ENCODE measurements at regions of chr9 and their contacts with region 1.

Region 1: DNA sequence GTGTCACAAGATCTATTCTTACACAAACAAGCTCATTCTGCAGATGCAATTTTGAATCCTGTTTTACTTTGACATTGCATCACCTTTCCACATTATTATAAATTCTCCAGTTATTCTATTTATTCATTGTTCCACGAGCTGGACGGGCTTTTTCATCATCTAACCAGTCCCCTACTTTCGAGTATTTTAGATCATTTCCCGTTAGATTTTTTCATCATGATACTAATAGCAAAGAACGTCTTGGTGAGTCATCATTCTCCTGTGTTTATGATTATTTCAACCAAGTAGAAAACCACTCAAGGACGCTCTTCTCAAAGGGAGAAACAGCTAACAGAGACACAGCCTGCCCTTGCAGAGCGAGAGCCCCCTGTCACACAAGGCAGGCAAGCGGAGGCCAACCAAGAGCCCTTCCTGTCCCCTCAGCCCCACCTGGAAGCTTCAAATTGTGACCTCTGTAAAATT is 15.1 kb downstream of the BBLN start:
- DNase-seq: no peak
- H3K4me3 ChIP-seq: no peak overlapping the region
- H3K27ac ChIP-seq: no peak overlapping the region
- H3K4me1 ChIP-seq: peaks cover 18% of the 10 kb centered on the region
- H3K27me3 ChIP-seq: no peaks in the 10 kb centered on the region
- CTCF ChIP-seq: no peak

Region 2: GRCh38 chr9:127698985-127699670 is 476.0 kb before region 1 on chr9:
- CTCF ChIA-PET with region 1: no interaction called
- POLR2A ChIA-PET with region 1: no interaction called
- intact Hi-C with region 1: no loop called
- DNase-seq: peak; percentile 88 to 97
- H3K4me3 ChIP-seq: peak overlapping the region; percentile 40; the same call in 1 of the 2 replicates
- H3K27ac ChIP-seq: no peak overlapping the region
- H3K4me1 ChIP-seq: peaks cover 4% of the 10 kb centered on the region
- H3K27me3 ChIP-seq: no peaks in the 10 kb centered on the region
- CTCF ChIP-seq: no peak

Region 3: DNA sequence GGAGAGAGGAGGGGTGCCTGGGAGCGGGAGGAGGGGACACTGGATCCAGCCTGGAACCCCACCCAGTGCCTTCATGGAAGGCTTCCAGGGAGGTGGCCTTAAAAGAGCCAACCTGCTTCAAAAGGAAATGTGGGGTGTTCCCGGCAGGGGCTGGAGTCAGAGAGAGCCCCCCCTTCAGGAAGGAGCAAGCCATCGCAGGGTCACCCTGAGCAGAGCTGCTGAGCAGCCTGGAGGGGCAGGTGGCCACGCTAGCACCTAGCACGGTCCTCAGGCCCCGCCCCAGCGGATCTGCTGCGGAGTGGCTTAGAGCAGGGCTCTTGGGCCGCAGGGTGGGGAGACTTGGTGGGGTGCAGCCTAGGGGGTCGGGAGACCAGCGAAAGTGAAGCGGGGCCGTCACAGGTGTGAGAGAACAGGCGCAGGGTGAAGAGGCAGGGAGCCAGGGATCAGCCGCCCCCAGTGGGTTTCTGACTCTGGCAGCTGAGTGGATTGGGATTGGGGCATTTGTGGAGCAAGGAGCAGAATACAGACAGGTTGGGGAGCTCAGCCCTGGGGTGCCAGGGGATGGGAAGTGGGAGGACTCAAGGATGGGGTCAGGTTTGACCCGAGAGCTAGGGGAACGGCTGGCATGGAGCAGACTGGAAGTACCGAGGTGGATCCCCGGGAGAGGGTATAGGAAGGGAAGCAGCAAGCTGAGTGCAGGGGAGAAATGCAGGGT is 24.4 kb before region 1 on chr9:
- CTCF ChIA-PET with region 1: no interaction called
- POLR2A ChIA-PET with region 1: interaction called, 3 read pairs
- intact Hi-C with region 1: loop called (anchors 1 kb)
- DNase-seq: peak; percentile 79 to 94
- H3K4me3 ChIP-seq: peak overlapping the region; percentile 97
- H3K27ac ChIP-seq: peak overlapping the region; percentile 99
- H3K4me1 ChIP-seq: peaks cover 44% of the 10 kb centered on the region
- H3K27me3 ChIP-seq: no peaks in the 10 kb centered on the region
- CTCF ChIP-seq: peak; percentile 64

Region 4: GRCh38 chr9:128159784-128160602 is 15.1 kb before region 1 on chr9 and contains the start of gene BBLN:
- CTCF ChIA-PET with region 1: no interaction called
- POLR2A ChIA-PET with region 1: interaction called, 7 read pairs
- intact Hi-C with region 1: loop called (anchors 2 kb)
- DNase-seq: peak; percentile 75 to 99
- H3K4me3 ChIP-seq: peak within 1 kb of the TSS; percentile 90
- H3K27ac ChIP-seq: peak within 1 kb of the TSS; percentile 69
- H3K4me1 ChIP-seq: 0 out of 2 replicates have a peak, but pooled peaks cover 9% of the 10 kb centered on the region
- H3K27me3 ChIP-seq: no peaks in the 10 kb centered on the region
- CTCF ChIP-seq: no peak
- total RNA-seq, gene BBLN: 154 and 213 TPM in 2 replicates

Region 5: DNA sequence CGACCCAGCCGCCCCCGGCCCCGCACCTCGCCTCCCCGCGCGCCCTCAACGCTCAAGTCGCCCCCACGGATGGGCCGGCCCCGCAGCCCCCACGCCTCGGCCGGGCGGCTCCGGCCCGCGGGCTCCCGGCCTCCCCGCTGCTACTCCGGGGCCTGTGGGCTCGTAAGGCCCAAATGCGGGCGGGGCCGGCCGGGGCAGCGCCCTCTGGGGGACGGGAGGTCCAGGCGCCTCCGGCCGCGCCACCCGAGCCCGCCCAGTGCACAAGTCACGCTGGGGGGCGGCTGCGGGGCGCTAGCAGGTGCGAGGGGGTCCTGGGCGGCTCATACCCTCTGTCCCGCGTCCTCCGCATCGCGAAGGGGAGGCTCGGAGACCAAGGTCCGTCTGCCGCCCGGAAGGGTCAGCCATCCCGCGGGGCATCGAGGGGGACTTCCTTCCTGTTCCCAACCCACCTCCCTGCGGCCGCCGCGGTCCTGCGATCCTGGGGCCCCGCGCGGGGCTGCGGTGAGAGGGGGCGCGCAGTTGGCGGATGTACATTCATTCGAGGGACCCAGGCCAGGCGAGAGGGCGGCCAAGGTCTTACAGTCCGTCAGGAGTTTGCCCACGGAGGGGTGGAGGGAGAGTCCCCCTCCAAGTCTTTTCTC is 16.4 kb after region 1 on chr9 and contains the start of gene CIZ1:
- CTCF ChIA-PET with region 1: no interaction called
- POLR2A ChIA-PET with region 1: no interaction called
- intact Hi-C with region 1: loop called (anchors 1 kb)
- DNase-seq: peak; percentile 46 to 83
- H3K4me3 ChIP-seq: peak within 1 kb of the TSS; percentile 83
- H3K27ac ChIP-seq: peak within 1 kb of the TSS; percentile 77
- H3K4me1 ChIP-seq: peaks cover 16% of the 10 kb centered on the region
- H3K27me3 ChIP-seq: no peaks in the 10 kb centered on the region
- CTCF ChIP-seq: peak; percentile 65
- total RNA-seq, gene CIZ1: 164 and 213 TPM in 2 replicates

Region 6: DNA sequence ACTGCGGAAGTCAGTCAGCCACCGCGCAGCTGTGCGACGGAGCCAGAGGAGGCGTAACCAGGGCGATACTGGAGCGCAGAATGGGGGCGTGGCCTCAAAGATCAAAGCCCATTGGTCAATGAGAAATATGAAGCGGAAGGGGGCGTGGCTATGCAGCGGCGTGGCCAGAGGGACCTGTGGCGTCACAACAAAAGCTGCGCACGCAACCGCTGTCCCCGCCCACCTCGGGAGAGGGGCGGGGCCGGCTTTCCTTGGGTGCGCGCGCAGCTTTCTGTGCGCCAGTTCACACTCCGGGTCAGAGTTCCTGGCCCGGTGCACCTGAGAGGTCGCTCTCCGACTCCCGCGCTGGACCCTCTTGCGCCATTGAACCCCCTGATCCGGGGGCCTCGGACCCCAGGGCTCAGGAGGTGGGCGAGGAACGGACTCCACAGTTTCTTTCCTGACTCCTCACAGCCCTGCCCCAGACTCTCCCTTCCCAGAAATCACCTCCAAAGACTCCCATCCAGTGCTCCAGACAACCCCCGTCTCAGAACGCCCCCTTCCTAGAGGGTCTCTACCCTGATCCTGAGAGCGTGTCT is 101.0 kb after region 1 on chr9 and contains the starts of genes GOLGA2 and SWI5:
- CTCF ChIA-PET with region 1: no interaction called
- POLR2A ChIA-PET with region 1: no interaction called
- intact Hi-C with region 1: loop called (anchors 1 kb)
- DNase-seq: peak; percentile 95 to 100
- H3K4me3 ChIP-seq: peak within 1 kb of the TSS; percentile 65
- H3K27ac ChIP-seq: peak within 1 kb of the TSS; percentile 51; the same call in 1 of the 2 replicates
- H3K4me1 ChIP-seq: peaks cover 36% of the 10 kb centered on the region
- H3K27me3 ChIP-seq: no peaks in the 10 kb centered on the region
- CTCF ChIP-seq: no peak
- total RNA-seq, gene GOLGA2: 175 and 188 TPM in 2 replicates
- total RNA-seq, gene SWI5: 70.4 and 86.0 TPM in 2 replicates

Measured in PC-9 (cell line).